GM18951 (cell line): ENCODE measurements at regions of chr14 and their contacts with region 1.

Region 1: DNA sequence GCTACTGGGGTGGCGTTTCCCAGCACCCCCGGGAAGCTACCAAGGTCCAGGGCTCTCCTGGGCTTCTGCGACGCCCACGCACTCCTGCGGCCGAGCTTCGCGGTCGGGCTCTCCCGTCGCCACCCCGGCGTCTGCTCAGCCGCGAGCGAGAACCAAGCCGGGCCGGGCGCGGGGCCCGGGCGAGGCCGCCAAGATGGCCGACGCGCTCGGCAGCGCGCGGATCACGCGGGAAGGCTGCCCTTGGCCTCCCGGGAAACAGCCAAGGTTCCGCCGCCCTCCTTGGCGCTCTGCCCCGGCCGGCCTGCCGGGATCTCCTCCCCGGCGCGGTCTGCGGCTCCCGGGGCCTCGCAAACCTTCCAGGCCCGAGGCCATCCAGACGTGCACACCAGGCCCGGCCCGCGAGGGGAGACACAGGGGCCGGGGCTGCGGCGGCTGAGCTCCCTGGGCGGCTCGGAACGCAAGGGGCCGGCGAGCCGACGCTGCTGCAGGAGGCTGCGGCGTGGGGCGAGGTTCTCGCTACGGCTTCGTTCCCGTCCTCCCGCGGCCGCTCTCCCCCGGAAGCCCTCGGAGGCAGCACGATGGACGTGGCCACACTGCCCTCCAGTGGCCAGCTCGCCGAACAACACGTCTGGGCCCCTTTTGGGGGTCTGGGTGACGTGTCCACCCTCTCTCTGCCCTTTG is 23.5 kb upstream of the ZFP36L1 start:
- POLR2A ChIP-seq: peak; percentile 75

Region 2: GRCh38 chr14:68248481-68249255 is 567.7 kb before region 1 on chr14:
- in situ Hi-C with region 1: loop called (anchors 10 kb)
- POLR2A ChIP-seq: no peak

Region 3: DNA sequence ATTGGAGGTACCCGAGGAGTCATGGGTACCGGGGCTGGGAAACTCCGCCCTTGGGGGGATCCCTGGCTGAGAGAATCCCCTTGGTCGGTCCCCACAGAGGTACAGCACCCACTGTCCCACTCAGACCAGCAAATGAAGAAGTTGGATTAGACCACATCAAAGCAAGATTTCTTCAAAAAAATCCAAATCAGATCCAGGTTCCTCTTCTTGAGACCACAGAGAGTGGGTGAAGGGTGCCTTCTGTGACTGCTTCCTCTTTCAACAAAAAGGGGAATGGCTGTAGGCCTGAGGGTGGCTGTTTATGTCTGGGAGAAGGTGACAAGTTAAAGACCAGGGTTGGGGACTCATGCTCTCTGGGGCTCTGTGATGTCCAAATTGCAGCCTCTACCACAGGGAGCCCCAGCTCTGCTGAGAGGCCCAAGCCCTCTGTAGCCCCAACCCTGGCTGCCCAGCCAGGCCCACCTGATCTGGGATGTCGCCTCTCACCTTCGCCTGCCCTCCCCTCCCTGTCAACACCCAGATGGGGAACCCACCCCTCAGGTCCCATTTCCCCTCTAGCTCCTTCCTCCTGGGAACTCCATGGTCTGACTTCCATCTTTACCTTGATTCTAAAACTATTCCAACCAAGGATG is 74.4 kb before region 1 on chr14:
- in situ Hi-C with region 1: no loop called
- POLR2A ChIP-seq: no peak

Region 4: DNA sequence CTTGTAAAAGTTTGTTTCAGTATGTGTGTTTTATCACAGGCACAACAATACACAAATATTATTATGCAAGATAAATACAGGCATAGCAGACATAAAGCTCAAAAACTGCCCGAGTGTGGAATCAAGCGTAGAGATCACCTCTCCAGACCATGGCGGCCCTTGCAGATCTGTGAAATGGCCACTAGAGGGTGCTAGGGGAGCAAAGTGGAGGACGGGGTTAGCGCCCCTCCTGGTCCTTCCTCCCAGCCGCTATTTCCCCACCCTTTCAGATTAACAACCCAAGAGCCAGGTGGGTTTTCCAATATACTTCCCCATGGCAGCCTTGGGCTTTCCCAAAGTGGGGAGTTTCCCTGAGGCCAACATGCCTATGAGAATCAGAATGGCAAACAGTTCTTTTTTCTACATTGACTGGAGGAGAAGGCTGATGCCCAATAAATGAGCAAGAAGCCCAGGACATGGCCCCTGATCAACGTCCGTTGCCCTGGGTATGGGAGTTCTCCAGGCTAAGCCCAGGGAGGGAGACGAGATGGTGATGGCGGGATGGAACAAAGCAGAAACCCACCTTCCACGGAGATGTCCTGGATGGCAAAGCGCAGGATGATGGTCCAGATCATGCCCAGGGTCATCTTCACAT is 95.3 kb after region 1 on chr14:
- in situ Hi-C with region 1: no loop called
- POLR2A ChIP-seq: no peak